MCF 10A (cell line): ENCODE measurements at regions of chr2 and their contacts with region 1.

Region 1: DNA sequence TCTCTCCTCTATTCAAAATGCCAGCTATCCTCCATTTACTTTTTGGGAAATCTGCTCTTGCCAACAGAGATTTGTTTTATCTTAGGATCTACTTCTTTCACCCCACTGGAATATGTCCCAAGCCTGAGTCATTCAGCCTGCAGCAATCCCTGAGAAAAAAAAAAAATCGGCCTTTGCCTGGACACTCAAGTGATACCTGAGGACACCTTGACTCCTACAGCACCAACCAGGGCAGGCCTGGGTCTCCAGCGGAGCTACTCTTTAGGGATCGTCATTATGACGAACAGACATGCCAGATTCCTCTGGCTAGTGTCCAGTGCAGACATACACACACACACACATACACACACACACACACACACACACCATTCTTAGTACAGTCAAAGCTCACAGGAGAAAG is 2.3 kb upstream of the UGT1A6 start:
- DNase-seq: peak; percentile 95
- H3K4me3 Mint-ChIP-seq: no peak overlapping the region
- H3K27ac Mint-ChIP-seq: peak overlapping the region; percentile 86
- H3K4me1 Mint-ChIP-seq: peaks cover 30% of the 10 kb centered on the region
- H3K27me3 Mint-ChIP-seq: no peaks in the 10 kb centered on the region
- CTCF ChIP-seq: no peak

Region 2: GRCh38 chr2:233453106-233453915 is 237.1 kb before region 1 on chr2:
- CTCF ChIA-PET with region 1: no interaction called
- POLR2A ChIA-PET with region 1: no interaction called
- intact Hi-C with region 1: no loop called
- DNase-seq: no peak
- H3K4me3 Mint-ChIP-seq: no peak overlapping the region
- H3K27ac Mint-ChIP-seq: no peak overlapping the region
- H3K4me1 Mint-ChIP-seq: peaks cover 4% of the 10 kb centered on the region
- H3K27me3 Mint-ChIP-seq: no peaks in the 10 kb centered on the region
- CTCF ChIP-seq: no peak

Region 3: DNA sequence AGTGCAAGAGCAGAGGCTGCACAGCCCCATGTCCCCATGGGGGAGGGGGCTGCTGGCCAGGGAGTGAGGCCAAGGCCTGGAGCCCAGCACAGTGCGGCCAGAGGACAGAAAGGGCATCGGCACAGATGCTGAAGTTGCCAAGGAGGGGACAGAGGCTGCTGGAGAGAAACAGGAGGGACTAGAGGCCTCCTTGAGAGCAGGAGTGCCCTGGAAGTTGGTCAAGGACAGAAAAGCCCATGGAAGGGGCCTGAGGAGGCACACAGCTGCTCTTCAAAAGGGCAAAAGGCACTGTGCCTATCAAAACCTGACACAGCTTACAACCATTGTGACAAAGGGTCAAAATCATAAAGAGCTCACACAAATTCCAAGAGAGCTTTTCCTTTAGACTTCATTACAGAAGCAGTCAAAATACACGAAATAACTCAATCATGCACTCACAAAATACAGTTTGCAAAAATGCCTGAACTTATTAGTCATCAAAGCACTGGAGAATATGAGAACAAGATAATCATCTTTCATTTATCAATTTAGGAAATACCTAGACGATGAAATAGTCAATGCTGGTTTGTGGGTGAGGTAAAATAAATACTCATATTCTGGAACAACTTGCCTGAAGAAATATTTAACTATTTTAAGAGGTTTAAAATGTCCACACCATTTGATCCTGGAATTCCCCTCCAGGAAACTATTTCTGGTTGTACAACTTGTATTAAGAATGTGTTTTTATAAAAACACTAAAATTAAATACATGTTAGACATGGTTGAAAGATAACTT is 203.5 kb before region 1 on chr2:
- CTCF ChIA-PET with region 1: no interaction called
- POLR2A ChIA-PET with region 1: interaction called, 14 read pairs
- intact Hi-C with region 1: no loop called
- DNase-seq: peak; percentile 63
- H3K4me3 Mint-ChIP-seq: peak overlapping the region; percentile 36
- H3K27ac Mint-ChIP-seq: peak overlapping the region; percentile 84
- H3K4me1 Mint-ChIP-seq: peaks cover 39% of the 10 kb centered on the region
- H3K27me3 Mint-ChIP-seq: no peaks in the 10 kb centered on the region
- CTCF ChIP-seq: no peak

Region 4: DNA sequence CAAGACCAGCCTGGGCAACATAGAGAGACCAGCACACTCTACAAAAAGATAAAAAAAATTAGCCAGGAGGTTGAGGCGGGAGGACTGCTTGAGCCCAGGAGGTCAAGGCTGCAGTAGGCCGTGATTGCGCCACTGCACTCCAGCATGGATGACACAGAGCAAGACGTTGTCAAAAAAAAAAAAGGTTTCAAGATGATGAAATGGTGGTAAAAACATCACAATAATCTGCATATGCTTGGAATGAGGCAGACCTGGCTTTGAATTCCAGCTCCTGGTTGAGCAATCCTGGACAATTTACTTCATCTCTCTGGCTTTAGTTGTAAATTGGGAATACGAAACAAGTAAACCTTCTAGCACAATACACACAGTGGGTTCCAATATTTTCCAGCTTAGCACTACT is 147.9 kb before region 1 on chr2:
- CTCF ChIA-PET with region 1: no interaction called
- POLR2A ChIA-PET with region 1: interaction called, 10 read pairs
- intact Hi-C with region 1: no loop called
- DNase-seq: peak; percentile 87
- H3K4me3 Mint-ChIP-seq: no peak overlapping the region
- H3K27ac Mint-ChIP-seq: peak overlapping the region; percentile 80
- H3K4me1 Mint-ChIP-seq: peaks cover 11% of the 10 kb centered on the region
- H3K27me3 Mint-ChIP-seq: no peaks in the 10 kb centered on the region
- CTCF ChIP-seq: no peak

Region 5: GRCh38 chr2:233556756-233557736 is 133.4 kb before region 1 on chr2:
- CTCF ChIA-PET with region 1: interaction called, 3 read pairs
- POLR2A ChIA-PET with region 1: interaction called, 16 read pairs
- intact Hi-C with region 1: no loop called
- DNase-seq: peak; percentile 76
- H3K4me3 Mint-ChIP-seq: peak overlapping the region; percentile 2
- H3K27ac Mint-ChIP-seq: peak overlapping the region; percentile 73
- H3K4me1 Mint-ChIP-seq: peaks cover 13% of the 10 kb centered on the region
- H3K27me3 Mint-ChIP-seq: no peaks in the 10 kb centered on the region
- CTCF ChIP-seq: no peak

Region 6: GRCh38 chr2:233566141-233566960 is 124.1 kb before region 1 on chr2 and contains the start of gene USP40:
- CTCF ChIA-PET with region 1: interaction called, 3 read pairs
- POLR2A ChIA-PET with region 1: interaction called, 59 read pairs
- intact Hi-C with region 1: no loop called
- DNase-seq: peak; percentile 94
- H3K4me3 Mint-ChIP-seq: peak within 1 kb of the TSS; percentile 99
- H3K27ac Mint-ChIP-seq: peak within 1 kb of the TSS; percentile 100
- H3K4me1 Mint-ChIP-seq: peaks cover 10% of the 10 kb centered on the region
- H3K27me3 Mint-ChIP-seq: no peaks in the 10 kb centered on the region
- CTCF ChIP-seq: no peak
- total RNA-seq, gene USP40: 56.3 and 67.3 TPM in 2 replicates

Region 7: DNA sequence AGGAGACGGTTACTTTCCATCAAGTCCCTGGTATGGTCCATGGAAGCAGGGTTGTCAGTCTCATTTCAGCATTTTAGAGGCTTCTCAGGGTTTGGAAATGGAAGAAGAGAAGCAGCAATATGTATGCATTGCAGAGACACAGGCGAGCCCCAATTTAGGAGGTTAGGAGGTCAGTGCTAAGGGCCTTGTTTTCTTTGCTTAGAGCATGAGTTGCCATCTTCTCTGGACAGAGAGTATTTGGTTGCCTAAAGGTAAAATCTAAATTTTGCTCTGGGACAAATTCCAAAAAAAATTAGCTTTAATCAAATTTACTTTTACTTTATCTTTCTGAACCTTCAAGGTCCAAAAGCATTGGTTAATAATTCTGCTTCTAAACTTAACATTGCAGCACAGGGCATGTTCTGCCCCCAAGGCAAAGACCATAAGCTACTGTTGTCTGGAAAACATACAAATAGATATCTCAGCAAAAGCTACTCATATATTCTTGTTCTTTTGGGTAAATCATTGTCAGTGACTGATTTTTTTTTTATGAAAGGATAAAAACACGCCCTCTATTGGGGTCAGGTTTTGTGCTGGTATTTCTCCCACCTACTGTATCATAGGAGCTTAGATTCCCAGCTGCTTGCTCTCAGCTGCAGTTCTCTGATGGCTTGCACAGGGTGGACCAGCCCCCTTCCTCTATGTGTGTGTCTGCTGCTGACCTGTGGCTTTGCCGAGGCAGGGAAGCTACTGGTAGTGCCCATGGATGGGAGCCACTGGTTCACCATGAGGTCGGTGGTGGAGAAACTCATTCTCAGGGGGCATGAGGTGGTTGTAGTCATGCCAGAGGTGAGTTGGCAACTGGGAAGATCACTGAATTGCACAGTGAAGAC is 18.9 kb before region 1 on chr2 and contains the start of gene UGT1A9:
- CTCF ChIA-PET with region 1: no interaction called
- POLR2A ChIA-PET with region 1: no interaction called
- intact Hi-C with region 1: no loop called
- DNase-seq: no peak
- H3K4me3 Mint-ChIP-seq: no peak within 1 kb of the TSS
- H3K27ac Mint-ChIP-seq: no peak within 1 kb of the TSS
- H3K4me1 Mint-ChIP-seq: no peaks in the 10 kb centered on the region
- H3K27me3 Mint-ChIP-seq: no peaks in the 10 kb centered on the region
- CTCF ChIP-seq: no peak
- total RNA-seq, gene UGT1A9: not detected in 2 replicates

Region 8: DNA sequence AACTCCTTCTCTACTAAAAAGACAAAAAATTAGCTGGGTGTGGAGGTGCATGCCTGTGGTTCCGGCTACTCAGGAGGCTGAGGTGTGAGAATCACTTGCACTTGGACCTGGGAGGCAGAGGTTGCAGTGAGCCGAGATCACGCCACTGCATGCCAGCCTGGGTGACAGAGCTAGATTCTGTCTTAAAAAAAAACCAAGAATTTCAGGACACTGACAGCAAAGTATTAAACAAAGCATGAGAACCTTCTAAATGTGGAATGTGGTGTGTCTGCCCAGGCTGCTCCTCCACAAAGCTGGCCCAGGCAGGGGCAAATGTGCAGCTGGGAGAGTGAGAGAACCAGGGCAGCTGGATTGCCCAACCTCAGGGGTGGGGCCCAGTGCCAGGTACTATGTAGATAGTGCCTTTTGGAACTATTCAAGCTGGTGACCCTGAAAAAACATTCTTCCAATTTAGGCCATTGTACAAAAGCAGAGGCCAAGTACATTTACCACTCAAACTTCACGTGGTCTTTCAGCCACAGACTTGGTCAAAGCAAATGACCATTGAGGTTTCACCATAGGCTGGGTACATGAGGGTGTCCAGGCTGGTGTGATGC is 15.6 kb after region 1 on chr2:
- CTCF ChIA-PET with region 1: interaction called, 18 read pairs
- POLR2A ChIA-PET with region 1: interaction called, 91 read pairs
- intact Hi-C with region 1: no loop called
- DNase-seq: peak; percentile 48
- H3K4me3 Mint-ChIP-seq: no peak overlapping the region
- H3K27ac Mint-ChIP-seq: no peak overlapping the region
- H3K4me1 Mint-ChIP-seq: peaks cover 19% of the 10 kb centered on the region
- H3K27me3 Mint-ChIP-seq: no peaks in the 10 kb centered on the region
- CTCF ChIP-seq: no peak

Region 9: GRCh38 chr2:233711312-233712008 is 21.0 kb after region 1 on chr2:
- CTCF ChIA-PET with region 1: interaction called, 18 read pairs
- POLR2A ChIA-PET with region 1: interaction called, 91 read pairs
- intact Hi-C with region 1: no loop called
- DNase-seq: peak; percentile 86
- H3K4me3 Mint-ChIP-seq: no peak overlapping the region
- H3K27ac Mint-ChIP-seq: no peak overlapping the region
- H3K4me1 Mint-ChIP-seq: peaks cover 31% of the 10 kb centered on the region
- H3K27me3 Mint-ChIP-seq: no peaks in the 10 kb centered on the region
- CTCF ChIP-seq: peak; percentile 89

Region 10: DNA sequence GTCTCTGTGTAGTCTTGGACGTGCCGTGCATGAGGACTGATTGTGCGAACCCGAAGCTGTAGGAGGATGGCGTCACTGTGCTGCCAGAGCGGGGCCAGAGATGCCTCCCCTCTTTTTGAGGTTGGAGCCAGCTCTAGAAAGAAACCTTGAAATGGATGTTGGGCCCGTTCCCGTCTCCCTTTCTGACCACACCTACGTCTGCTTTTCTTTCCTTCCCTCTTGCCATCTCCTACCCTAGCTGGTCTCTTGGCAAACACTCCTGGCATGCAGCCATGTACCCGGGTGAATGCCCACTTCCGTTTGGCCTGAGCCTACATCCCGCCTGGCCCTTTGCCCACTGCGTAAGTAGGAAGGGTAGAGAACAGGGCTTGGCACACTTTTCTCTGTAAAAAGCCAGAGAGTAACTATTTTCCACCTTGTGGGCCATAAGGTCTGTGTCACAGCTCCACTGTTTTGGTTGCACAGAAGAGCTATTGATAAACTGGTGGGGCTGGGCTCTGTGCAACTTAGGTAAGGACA is 1298.8 kb after region 1 on chr2:
- CTCF ChIA-PET with region 1: no interaction called
- POLR2A ChIA-PET with region 1: no interaction called
- intact Hi-C with region 1: no loop called
- DNase-seq: peak; percentile 100
- H3K4me3 Mint-ChIP-seq: peak overlapping the region; percentile 66
- H3K27ac Mint-ChIP-seq: peak overlapping the region; percentile 86
- H3K4me1 Mint-ChIP-seq: peaks cover 44% of the 10 kb centered on the region
- H3K27me3 Mint-ChIP-seq: no peaks in the 10 kb centered on the region
- CTCF ChIP-seq: no peak